Gastrocnemius medialis (tissue), 4 donors: ENCODE measurements at regions of chr19 and their contacts with region 1.

Region 1: DNA sequence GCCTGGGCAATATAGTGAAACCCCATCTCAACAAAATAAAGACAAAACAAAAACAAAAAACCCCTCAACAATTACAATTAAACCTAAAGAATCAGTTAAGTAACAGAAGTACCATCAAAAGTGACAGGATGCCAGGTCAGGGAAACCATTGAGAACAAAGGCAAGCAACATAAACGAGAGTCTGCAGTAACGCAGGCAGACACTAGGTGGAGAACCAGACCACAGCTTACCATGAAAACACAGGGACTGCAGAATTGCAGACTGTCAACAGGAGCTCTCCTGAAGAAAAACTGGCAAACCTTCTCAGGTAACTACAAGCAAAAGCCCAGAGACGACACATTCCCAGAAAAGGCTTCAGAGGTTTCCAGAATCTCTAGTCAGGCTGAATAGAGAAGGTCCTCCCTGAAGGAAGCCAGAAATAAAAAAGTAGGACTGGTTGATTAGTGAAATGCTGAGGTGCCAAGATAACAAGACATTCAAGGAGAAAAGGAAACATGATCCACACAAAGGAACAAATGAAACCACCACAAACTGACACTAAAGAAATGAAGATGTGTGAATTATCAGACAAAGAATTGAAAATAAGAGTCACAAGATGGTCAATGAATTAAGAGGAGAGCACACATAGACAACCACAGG is 2.2 kb upstream of the ZNF665 start:
- DNase-seq: peak; percentile 8 to 39
- ATAC-seq: peak; percentile 47 to 53
- H3K4me3 ChIP-seq: no peak overlapping the region
- H3K27ac ChIP-seq: no peak overlapping the region
- H3K4me1 ChIP-seq: peaks cover 3 to 5% of the 10 kb centered on the region in 2 donors
- H3K27me3 ChIP-seq: no peaks in the 10 kb centered on the region
- CTCF ChIP-seq: peak; percentile 25 to 71 (median 62)
- POLR2A ChIP-seq: no peak

Region 2: DNA sequence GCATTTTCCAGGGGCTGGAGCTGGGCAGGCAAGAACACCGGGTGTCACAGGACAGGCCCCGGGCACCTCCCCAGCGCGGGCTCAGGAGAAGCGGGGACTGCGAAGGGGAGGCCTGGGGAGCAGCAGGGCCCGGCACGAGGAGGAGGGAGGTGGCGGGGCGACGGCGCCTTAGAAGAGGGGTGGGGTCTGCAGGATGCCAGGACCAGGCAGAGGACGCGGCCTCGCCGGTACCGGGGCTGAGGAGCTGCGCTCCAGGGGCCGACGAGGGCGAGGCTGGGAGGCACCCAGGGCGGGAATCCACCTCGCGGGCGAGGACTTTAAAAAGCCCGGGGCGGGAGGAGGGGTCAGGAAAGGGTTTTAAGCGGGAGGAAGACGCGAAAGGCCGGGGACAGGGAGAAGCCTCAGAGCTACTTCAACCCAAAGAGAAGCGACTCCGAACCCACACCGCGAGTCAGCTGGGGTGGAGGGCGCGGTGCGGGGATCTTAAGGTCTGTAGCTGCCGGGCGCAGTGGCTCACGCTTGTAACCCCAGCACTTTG is 37.2 kb before region 1 on chr19:
- in situ Hi-C with region 1: no loop called
- intact Hi-C with region 1: loop called (anchors 5 kb)
- DNase-seq: peak in 1 of 2 donors; percentile 12
- ATAC-seq: peak; percentile 26 to 40
- H3K4me3 ChIP-seq: peak overlapping the region; percentile 61 to 82 (median 70)
- H3K27ac ChIP-seq: peak overlapping the region; percentile 60 to 79 (median 77)
- H3K4me1 ChIP-seq: peaks cover 0 to 17% of the 10 kb centered on the region in 2 donors
- H3K27me3 ChIP-seq: no peaks in the 10 kb centered on the region
- CTCF ChIP-seq: no peak
- POLR2A ChIP-seq: no peak

Region 3: GRCh38 chr19:53333463-53334449 is 138.4 kb after region 1 on chr19 and contains the start of gene ZNF845:
- in situ Hi-C with region 1: no loop called
- intact Hi-C with region 1: loop called (anchors 5 kb)
- DNase-seq: peak; percentile 73 to 74
- ATAC-seq: peak; percentile 91 to 97
- H3K4me3 ChIP-seq: peak within 1 kb of the TSS; percentile 61 to 74 (median 71)
- H3K27ac ChIP-seq: peak within 1 kb of the TSS; percentile 61 to 75 (median 69)
- H3K4me1 ChIP-seq: no peaks in the 10 kb centered on the region
- H3K27me3 ChIP-seq: no peaks in the 10 kb centered on the region
- CTCF ChIP-seq: no peak
- POLR2A ChIP-seq: peak in 1 of 2 donors; percentile 19
- total RNA-seq, gene ZNF845: 1.00 to 2.3 (median 1.4) TPM

Region 4: GRCh38 chr19:53431399-53432087 is 236.2 kb after region 1 on chr19 and contains the start of gene ZNF761:
- in situ Hi-C with region 1: no loop called
- intact Hi-C with region 1: loop called (anchors 10 kb)
- DNase-seq: peak; percentile 87 to 90
- ATAC-seq: peak; percentile 98
- H3K4me3 ChIP-seq: peak within 1 kb of the TSS; percentile 74 to 91 (median 81)
- H3K27ac ChIP-seq: peak within 1 kb of the TSS; percentile 72 to 74 (median 74)
- H3K4me1 ChIP-seq: peaks cover 0 to 7% of the 10 kb centered on the region in 2 donors
- H3K27me3 ChIP-seq: no peaks in the 10 kb centered on the region
- CTCF ChIP-seq: peak in 4 of 5 experiments; percentile 35 to 45 (median 40)
- POLR2A ChIP-seq: peak; percentile 67 to 84
- total RNA-seq, gene ZNF761: 3.7 to 7.0 (median 4.1) TPM

Region 5: GRCh38 chr19:53520550-53521372 is 325.4 kb after region 1 on chr19:
- in situ Hi-C with region 1: loop called in 1 of 4 experiments (anchors 25 kb)
- intact Hi-C with region 1: no loop called
- DNase-seq: peak; percentile 90 to 94
- ATAC-seq: peak; percentile 99 to 100
- H3K4me3 ChIP-seq: peak overlapping the region; percentile 59 to 74 (median 62)
- H3K27ac ChIP-seq: peak overlapping the region; percentile 61 to 89 (median 75)
- H3K4me1 ChIP-seq: peaks cover 0 to 10% of the 10 kb centered on the region in 2 donors
- H3K27me3 ChIP-seq: no peaks in the 10 kb centered on the region
- CTCF ChIP-seq: no peak
- POLR2A ChIP-seq: no peak